ENCODE measurements at regions of chr21 and their contacts with region 1.

Region 1: DNA sequence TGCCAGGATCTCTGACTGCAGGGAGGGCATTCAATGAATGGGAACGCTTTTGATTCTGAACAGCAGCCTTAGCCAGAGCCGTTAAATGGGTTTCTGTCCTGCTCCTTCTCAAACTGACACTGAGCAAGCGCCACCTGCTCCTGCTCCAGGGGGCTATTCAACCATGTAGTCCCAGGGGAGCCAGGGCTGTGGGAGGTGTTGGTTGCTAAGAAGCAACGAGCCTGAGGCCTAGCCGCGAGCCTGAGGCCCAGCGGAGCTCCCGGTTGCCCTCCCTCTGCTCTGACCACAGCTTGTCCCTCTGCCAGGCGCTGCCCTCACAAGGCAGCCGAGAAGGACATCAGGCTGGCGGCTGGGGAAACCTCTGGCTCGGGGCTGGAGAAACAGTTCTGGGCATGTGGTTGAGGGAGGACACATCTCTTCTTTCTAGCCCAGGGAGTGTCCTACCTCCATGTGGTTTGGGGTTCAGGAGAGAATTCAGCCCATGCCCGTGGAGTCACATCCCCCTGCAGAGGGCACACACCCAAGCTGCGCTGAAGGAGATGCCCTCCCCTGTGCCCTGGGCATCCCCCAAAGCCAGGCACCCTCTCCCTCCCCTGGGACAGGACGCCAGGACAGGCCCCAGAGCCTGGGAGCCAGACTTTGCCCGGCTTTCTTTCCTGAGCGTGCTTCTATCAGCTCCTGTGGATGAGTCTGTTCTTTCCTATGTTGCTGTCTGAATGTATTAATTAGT is 18.0 kb downstream of the PCP4 start:
- DNase-seq: no peak
- H3K4me3 ChIP-seq: no peak overlapping the region
- H3K27ac ChIP-seq: peak overlapping the region in 1 of 2 donors; percentile 27
- H3K4me1 ChIP-seq: no peaks in the 10 kb centered on the region
- H3K27me3 ChIP-seq: no peaks in the 10 kb centered on the region
- CTCF ChIP-seq: no peak
- POLR2A ChIP-seq: no peak

Region 2: GRCh38 chr21:39951183-39952091 is 66.2 kb after region 1 on chr21:
- intact Hi-C with region 1: loop called (anchors 5 kb)
- DNase-seq: no peak
- H3K4me3 ChIP-seq: no peak overlapping the region
- H3K27ac ChIP-seq: peak overlapping the region in 1 of 2 donors; percentile 49
- H3K4me1 ChIP-seq: no peaks in the 10 kb centered on the region
- H3K27me3 ChIP-seq: no peaks in the 10 kb centered on the region
- CTCF ChIP-seq: no peak
- POLR2A ChIP-seq: no peak

Measured in prostate gland (tissue), 2 donors.